SK-N-SH (cell line): ENCODE measurements at regions of chr4 and their contacts with region 1.

Region 1: DNA sequence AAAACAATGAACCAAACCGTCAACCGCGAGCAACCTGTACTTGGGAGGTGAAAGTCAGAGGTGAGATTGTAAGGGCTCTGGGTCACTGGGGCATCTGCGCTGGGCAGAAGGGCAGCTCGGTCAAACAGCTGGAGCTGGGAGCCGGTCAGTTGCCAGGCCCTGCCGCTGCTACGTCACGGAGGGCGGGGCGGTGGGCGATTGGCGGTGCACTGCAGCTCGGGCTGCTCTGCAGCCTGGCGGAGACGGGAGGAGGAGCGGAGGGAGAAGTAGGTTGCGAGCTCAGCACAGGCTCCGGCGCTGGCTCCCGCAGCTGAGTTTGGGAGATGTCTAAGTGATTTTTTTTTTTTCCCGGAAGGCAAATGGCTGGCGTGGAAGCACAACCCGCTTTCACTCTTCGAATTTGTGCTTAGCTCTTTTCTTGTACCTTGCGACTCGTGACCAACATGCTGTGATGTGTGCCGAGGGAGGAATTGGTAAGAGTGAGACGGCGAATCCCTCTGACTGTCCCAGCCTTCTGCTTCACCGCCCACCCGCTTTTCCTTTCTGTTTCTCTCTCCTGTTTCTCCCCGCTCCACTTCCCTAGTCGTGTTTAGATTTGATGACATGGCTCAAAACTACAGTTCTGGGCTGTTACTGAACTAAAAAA is at the start of gene ATP10D:
- DNase-seq: peak; percentile 89
- H3K4me3 ChIP-seq: peak within 1 kb of the TSS; percentile 64 to 80
- H3K27ac ChIP-seq: peak within 1 kb of the TSS; percentile 96
- H3K4me1 ChIP-seq: peaks cover 6 to 7% of the 10 kb centered on the region in 2 experiments; a peak in 2 of 4 replicates
- H3K27me3 ChIP-seq: no peaks in the 10 kb centered on the region
- CTCF ChIP-seq: no peak
- EP300 ChIP-seq: peak in 1 of 2 experiments; percentile 18; a peak in 1 of 4 replicates
- RAD21 ChIP-seq: no peak; the same call in 1 of the 2 replicates
- polyA plus RNA-seq, gene ATP10D: 7.9 and 12.6 TPM in 2 replicates

Region 2: GRCh38 chr4:47413521-47413920 is 71.6 kb before region 1 on chr4:
- CTCF ChIA-PET with region 1: no interaction called
- POLR2A ChIA-PET with region 1: no interaction called
- DNase-seq: no peak
- H3K4me3 ChIP-seq: no peak overlapping the region
- H3K27ac ChIP-seq: no peak overlapping the region
- H3K4me1 ChIP-seq: no peaks in the 10 kb centered on the region
- H3K27me3 ChIP-seq: no peaks in the 10 kb centered on the region; the same call in 1 of the 2 replicates
- CTCF ChIP-seq: no peak
- EP300 ChIP-seq: no peak
- RAD21 ChIP-seq: no peak

Region 3: DNA sequence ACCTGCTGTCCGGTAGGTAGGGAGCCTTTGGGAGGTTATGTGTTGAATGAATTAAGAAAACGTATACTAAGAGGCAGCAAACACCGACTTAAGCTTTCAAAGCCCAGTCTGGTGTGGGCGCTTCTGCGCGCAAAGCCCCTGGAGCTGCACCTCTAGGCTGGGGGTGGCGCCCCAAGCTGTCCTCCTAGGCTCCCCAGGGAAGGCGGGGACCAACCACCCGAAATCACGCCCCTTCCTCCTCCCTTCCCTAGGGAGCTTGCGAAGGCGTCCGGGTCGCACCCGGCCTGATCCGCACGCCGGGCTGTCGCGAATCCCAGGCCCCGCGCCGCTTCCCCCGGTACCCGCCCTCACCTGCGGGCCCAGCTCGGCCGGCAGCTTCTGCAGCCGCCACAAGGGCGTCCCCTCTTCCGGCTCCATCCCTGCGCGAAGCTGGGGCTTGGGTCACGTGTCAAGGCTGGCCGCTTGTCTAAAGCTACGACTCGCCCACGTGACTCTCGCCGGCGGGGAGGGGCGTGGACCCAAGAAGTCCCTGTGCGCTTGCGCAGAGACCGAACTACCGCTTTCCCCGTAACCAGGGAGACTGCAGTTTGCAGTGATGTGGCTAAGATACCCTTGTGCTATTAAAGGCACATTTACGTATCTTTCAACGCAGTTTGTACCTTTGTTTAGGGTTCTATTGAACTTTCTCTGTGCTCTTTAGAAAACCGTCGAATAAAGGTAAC is 21.8 kb before region 1 on chr4 and contains the start of gene COMMD8:
- CTCF ChIA-PET with region 1: interaction called, 4 read pairs
- POLR2A ChIA-PET with region 1: interaction called, 12 read pairs
- DNase-seq: peak; percentile 95
- H3K4me3 ChIP-seq: peak within 1 kb of the TSS; percentile 89 to 95
- H3K27ac ChIP-seq: peak within 1 kb of the TSS; percentile 71 to 94
- H3K4me1 ChIP-seq: peaks cover 0 to 5% of the 10 kb centered on the region in 2 experiments; a peak in 2 of 4 replicates
- H3K27me3 ChIP-seq: no peaks in the 10 kb centered on the region
- CTCF ChIP-seq: peak; percentile 27
- EP300 ChIP-seq: no peak
- RAD21 ChIP-seq: 0 out of 2 replicates have a peak, but pooled peaks have one; percentile 13
- polyA plus RNA-seq, gene COMMD8: 7.0 and 9.9 TPM in 2 replicates